H1 (cell line): ENCODE measurements at regions of chrX and their contacts with region 1.

Region 1: GRCh38 chrX:13938051-13938828 is 91.5 kb downstream of the GEMIN8 start:
- DNase-seq: peak in 1 of 2 experiments; percentile 67
- H3K4me3 ChIP-seq: peak overlapping the region; percentile 44 to 84 (median 60)
- H3K27ac ChIP-seq: peak overlapping the region; percentile 84; the same call in 1 of the 2 replicates
- H3K4me1 ChIP-seq: peaks cover 9 to 21% (median 16%) of the 10 kb centered on the region in 4 experiments; a peak in 6 of 7 replicates
- H3K27me3 ChIP-seq: no peaks in the 10 kb centered on the region
- CTCF ChIP-seq: no peak
- EP300 ChIP-seq: no peak
- POLR2A ChIP-seq: peak; percentile 31 to 51; a peak in 2 of 3 replicates
- RAD21 ChIP-seq: no peak

Region 2: GRCh38 chrX:13927175-13927574 is 11.1 kb before region 1 on chrX:
- CTCF ChIA-PET with region 1: interaction called, 3 read pairs
- POLR2A ChIA-PET with region 1: interaction called, 11 read pairs
- DNase-seq: no peak
- H3K4me3 ChIP-seq: no peak overlapping the region
- H3K27ac ChIP-seq: no peak overlapping the region
- H3K4me1 ChIP-seq: peaks cover 0 to 7% (median 0%) of the 10 kb centered on the region in 4 experiments; a peak in 3 of 7 replicates
- H3K27me3 ChIP-seq: no peaks in the 10 kb centered on the region
- CTCF ChIP-seq: no peak
- EP300 ChIP-seq: no peak
- POLR2A ChIP-seq: no peak
- RAD21 ChIP-seq: no peak

Region 3: GRCh38 chrX:14029425-14030173 is 91.4 kb after region 1 on chrX and contains the start of gene GEMIN8:
- CTCF ChIA-PET with region 1: no interaction called
- POLR2A ChIA-PET with region 1: interaction called, 18 read pairs
- DNase-seq: peak; percentile 51 to 85
- H3K4me3 ChIP-seq: peak within 1 kb of the TSS; percentile 57 to 70 (median 66)
- H3K27ac ChIP-seq: peak within 1 kb of the TSS; percentile 83
- H3K4me1 ChIP-seq: peaks cover 0 to 8% (median 6%) of the 10 kb centered on the region in 4 experiments; a peak in 4 of 7 replicates
- H3K27me3 ChIP-seq: no peaks in the 10 kb centered on the region
- CTCF ChIP-seq: no peak
- EP300 ChIP-seq: no peak; a peak in 1 of 3 replicates
- POLR2A ChIP-seq: peak in 1 of 2 experiments; percentile 65; a peak in 2 of 3 replicates
- RAD21 ChIP-seq: no peak
- total RNA-seq, gene GEMIN8: 18.2 and 19.9 TPM in 2 replicates